ENCODE measurements at regions of chr10 and their contacts with region 1.

Region 1: GRCh38 chr10:87878664-87879459 is 15.4 kb downstream of the PTEN start:
- DNase-seq: no peak
- ATAC-seq: no peak
- H3K4me3 ChIP-seq: no peak overlapping the region
- H3K4me1 ChIP-seq: peaks cover 8% of the 10 kb centered on the region
- CTCF ChIP-seq: no peak

Region 2: GRCh38 chr10:87598700-87599099 is 280.2 kb before region 1 on chr10:
- intact Hi-C with region 1: no loop called
- DNase-seq: no peak
- ATAC-seq: no peak
- H3K4me3 ChIP-seq: no peak overlapping the region
- H3K4me1 ChIP-seq: peaks cover 5% of the 10 kb centered on the region
- CTCF ChIP-seq: no peak

Region 3: DNA sequence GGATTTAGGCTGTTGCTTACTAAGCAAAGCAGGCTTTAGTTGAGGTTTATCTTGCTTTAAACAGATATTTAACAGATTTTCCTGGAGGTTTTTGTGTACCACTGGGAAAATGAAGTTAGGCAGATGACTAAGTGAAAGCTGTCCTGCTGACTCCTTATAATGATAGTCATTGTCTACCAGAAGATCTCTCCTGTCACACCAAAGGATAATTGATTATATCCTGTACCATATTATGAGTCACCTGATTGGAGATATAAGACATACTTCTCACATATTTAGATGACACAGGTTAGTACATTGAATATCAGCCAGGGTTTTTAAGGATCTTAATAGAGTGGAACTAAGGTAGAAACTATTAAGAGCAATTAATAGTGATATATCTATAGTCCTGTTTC is 53.0 kb after region 1 on chr10:
- intact Hi-C with region 1: loop called in 1 of 2 experiments (anchors 10 kb)
- DNase-seq: no peak
- ATAC-seq: no peak
- H3K4me3 ChIP-seq: no peak overlapping the region
- H3K4me1 ChIP-seq: no peaks in the 10 kb centered on the region
- CTCF ChIP-seq: no peak

Measured in mucosa of descending colon (tissue), 3 donors.